Sigmoid colon (tissue), 7 donors: ENCODE measurements at regions of chr2 and their contacts with region 1.

Region 1: DNA sequence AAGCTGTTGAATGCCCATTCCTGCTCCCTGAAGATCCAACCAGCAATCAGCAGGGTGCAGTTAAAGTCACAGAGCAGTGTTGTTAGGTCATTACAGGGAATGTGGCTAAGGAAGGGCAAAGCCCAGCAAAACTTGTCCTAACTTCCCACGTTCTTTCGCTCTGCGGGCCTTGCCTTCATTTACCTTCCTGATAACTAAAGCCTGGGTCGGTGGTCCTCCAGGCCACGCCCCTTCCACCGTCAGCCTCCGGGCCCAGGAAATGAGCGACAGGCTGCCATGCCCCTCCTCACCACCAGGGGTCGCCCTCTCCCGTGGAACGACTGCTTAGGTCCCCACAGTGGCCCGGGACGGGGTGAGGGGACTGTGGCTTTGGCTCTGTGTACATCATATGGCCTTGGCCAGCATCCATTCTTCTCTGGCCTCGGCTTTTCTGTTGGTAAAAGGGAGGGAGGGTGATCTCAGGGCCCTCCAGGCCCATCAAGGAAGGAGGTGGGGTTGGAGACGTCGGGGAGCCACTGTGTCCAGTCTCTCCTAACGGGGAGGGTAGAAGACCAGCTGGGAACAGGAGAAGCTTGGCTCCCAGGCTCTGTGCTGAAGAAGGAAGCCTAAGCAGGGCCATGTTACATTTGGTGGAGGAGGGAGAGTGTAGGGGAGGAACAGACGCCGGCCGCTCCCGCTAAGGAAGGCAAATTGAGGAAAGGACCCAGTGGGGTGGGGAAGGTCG is 2.2 kb downstream of the SH2D6 start:
- DNase-seq: peak; percentile 94
- H3K4me3 ChIP-seq: peak overlapping the region in 2 of 4 donors; percentile 3 to 10
- H3K27ac ChIP-seq: peak overlapping the region; percentile 66 to 94 (median 93)
- H3K4me1 ChIP-seq: peaks cover 0 to 32% (median 30%) of the 10 kb centered on the region in 4 donors
- H3K27me3 ChIP-seq: no peaks in the 10 kb centered on the region
- CTCF ChIP-seq: peak; percentile 99 to 100 (median 100)
- EP300 ChIP-seq: no peak
- POLR2A ChIP-seq: no peak

Region 2: GRCh38 chr2:85230679-85231467 is 189.8 kb before region 1 on chr2:
- intact Hi-C with region 1: no loop called
- DNase-seq: no peak
- H3K4me3 ChIP-seq: no peak overlapping the region
- H3K27ac ChIP-seq: no peak overlapping the region
- H3K4me1 ChIP-seq: no peaks in the 10 kb centered on the region
- H3K27me3 ChIP-seq: no peaks in the 10 kb centered on the region
- CTCF ChIP-seq: no peak
- EP300 ChIP-seq: no peak
- POLR2A ChIP-seq: no peak

Region 3: GRCh38 chr2:85396531-85397470 is 23.9 kb before region 1 on chr2:
- intact Hi-C with region 1: no loop called
- DNase-seq: peak; percentile 73
- H3K4me3 ChIP-seq: peak overlapping the region in 3 of 4 donors; percentile 1 to 20 (median 8)
- H3K27ac ChIP-seq: peak overlapping the region; percentile 62 to 75 (median 72)
- H3K4me1 ChIP-seq: peaks cover 0 to 27% (median 17%) of the 10 kb centered on the region in 4 donors
- H3K27me3 ChIP-seq: no peaks in the 10 kb centered on the region
- CTCF ChIP-seq: no peak
- EP300 ChIP-seq: no peak
- POLR2A ChIP-seq: no peak

Region 4: DNA sequence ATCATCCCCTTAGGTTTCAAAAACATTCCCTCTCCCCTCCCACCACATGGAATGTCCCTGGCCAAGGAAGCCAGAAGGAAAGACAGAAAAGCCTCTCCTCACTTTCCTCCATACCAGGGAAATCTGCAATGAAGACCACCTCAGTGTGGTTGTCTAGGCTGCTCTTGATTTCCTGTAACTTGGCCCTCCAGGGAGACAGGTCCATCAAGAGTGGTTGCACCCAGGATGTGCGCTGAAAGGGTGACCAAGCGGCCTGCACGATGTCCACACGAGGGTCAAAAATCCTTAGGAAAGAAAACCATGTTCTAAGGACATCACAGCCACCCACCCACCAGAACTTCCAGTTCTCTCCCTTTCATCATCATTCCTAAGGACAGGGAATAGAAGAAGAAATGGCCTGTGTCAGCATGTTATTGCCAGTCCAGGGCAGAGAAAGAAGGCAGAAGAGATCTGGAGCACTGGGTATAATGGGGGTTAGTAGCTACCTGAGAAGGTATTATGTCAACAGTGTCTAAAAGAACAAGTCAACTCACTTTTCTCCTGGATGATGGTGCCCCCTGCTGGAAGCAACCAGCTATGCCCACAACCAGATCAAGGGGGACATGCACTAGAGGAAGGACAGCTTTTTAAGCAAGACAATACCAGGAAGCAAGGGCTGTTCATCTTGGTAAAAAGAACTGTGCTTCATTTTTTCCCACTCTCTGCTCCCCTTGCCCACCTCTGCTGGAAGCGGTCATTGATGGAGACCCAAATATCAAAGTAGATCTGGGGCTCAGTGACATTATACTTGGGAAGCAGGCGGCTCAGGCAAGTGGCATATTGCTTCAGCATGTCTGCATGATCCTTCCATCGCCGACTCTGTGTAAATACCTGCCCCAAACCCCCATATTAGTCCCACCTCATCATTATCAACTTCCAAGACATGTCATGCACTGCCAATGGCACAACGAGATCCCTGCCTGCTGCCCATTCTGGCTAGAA is 131.3 kb after region 1 on chr2:
- intact Hi-C with region 1: loop called (anchors 1 kb)
- DNase-seq: peak; percentile 90
- H3K4me3 ChIP-seq: no peak overlapping the region
- H3K27ac ChIP-seq: peak overlapping the region in 1 of 4 donors; percentile 25
- H3K4me1 ChIP-seq: no peaks in the 10 kb centered on the region
- H3K27me3 ChIP-seq: no peaks in the 10 kb centered on the region
- CTCF ChIP-seq: peak; percentile 85 to 94 (median 93)
- EP300 ChIP-seq: no peak
- POLR2A ChIP-seq: no peak

Region 5: GRCh38 chr2:85602476-85603234 is 182.0 kb after region 1 on chr2 and contains the start of gene TMEM150A:
- intact Hi-C with region 1: loop called (anchors 2 kb)
- DNase-seq: peak; percentile 97
- H3K4me3 ChIP-seq: peak within 1 kb of the TSS; percentile 69 to 85 (median 77)
- H3K27ac ChIP-seq: peak within 1 kb of the TSS; percentile 86 to 97 (median 92)
- H3K4me1 ChIP-seq: peaks cover 0 to 48% (median 44%) of the 10 kb centered on the region in 4 donors
- H3K27me3 ChIP-seq: no peaks in the 10 kb centered on the region
- CTCF ChIP-seq: peak in 1 of 4 experiments; percentile 39
- EP300 ChIP-seq: no peak
- POLR2A ChIP-seq: peak in 1 of 2 donors; percentile 39
- total RNA-seq, gene TMEM150A: 18.4 to 29.9 (median 22.1) TPM